Activated naive CD4-positive, alpha-beta T cell treated with anti-CD3 and anti-CD28 coated beads for 36 hours (primary cell): ENCODE measurements at regions of chr14 and their contacts with region 1.

Region 1: GRCh38 chr14:54347997-54348611 is 48.7 kb upstream of the CDKN3 start:
- DNase-seq: no peak
- H3K4me3 Mint-ChIP-seq: no peak overlapping the region
- H3K27ac Mint-ChIP-seq: no peak overlapping the region
- H3K4me1 Mint-ChIP-seq: peaks cover 2% of the 10 kb centered on the region
- H3K27me3 Mint-ChIP-seq: peaks cover 18% of the 10 kb centered on the region

Region 2: GRCh38 chr14:53412803-53413675 is 935.1 kb before region 1 on chr14:
- CTCF ChIA-PET with region 1: no interaction called
- intact Hi-C with region 1: loop called (anchors 1 kb)
- DNase-seq: peak; percentile 6
- H3K4me3 Mint-ChIP-seq: no peak overlapping the region
- H3K27ac Mint-ChIP-seq: no peak overlapping the region
- H3K4me1 Mint-ChIP-seq: no peaks in the 10 kb centered on the region
- H3K27me3 Mint-ChIP-seq: no peaks in the 10 kb centered on the region

Region 3: GRCh38 chr14:53539489-53540126 is 808.5 kb before region 1 on chr14:
- CTCF ChIA-PET with region 1: interaction called, 8 read pairs
- intact Hi-C with region 1: loop called (anchors 1 kb)
- DNase-seq: peak; percentile 75
- H3K4me3 Mint-ChIP-seq: no peak overlapping the region
- H3K27ac Mint-ChIP-seq: no peak overlapping the region
- H3K4me1 Mint-ChIP-seq: no peaks in the 10 kb centered on the region
- H3K27me3 Mint-ChIP-seq: peaks cover 3% of the 10 kb centered on the region

Region 4: DNA sequence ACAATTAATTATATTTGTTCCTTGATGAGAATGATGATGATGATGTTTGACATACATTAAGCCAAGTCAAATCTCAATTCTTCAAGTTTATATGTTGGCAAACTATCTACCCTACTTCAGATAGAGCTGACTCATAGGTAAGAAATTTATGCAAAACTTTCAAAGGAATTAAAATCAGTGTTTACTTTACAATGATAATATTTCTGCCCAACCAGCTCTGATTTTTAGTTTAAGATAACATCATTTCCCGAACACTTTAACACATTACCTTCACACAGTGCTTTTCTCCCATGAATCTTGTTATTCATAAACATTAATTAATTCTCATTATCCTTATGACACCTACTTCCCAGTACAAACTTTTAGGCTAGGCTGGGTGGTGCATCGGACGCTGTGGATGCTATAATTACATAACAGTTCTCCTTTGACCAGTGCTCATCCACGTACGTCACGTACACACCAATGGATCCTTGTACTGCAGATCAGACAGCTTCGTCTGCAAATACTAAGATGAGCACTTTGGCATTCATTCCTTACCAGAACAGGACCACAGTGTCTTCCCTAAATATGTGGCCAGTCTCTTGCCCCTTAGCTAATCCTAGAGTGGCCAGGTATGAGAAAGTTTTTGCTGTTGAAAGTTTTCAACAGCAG is 409.8 kb before region 1 on chr14:
- CTCF ChIA-PET with region 1: no interaction called
- intact Hi-C with region 1: no loop called
- DNase-seq: no peak
- H3K4me3 Mint-ChIP-seq: no peak overlapping the region
- H3K27ac Mint-ChIP-seq: no peak overlapping the region
- H3K4me1 Mint-ChIP-seq: no peaks in the 10 kb centered on the region
- H3K27me3 Mint-ChIP-seq: peaks cover 8% of the 10 kb centered on the region

Region 5: DNA sequence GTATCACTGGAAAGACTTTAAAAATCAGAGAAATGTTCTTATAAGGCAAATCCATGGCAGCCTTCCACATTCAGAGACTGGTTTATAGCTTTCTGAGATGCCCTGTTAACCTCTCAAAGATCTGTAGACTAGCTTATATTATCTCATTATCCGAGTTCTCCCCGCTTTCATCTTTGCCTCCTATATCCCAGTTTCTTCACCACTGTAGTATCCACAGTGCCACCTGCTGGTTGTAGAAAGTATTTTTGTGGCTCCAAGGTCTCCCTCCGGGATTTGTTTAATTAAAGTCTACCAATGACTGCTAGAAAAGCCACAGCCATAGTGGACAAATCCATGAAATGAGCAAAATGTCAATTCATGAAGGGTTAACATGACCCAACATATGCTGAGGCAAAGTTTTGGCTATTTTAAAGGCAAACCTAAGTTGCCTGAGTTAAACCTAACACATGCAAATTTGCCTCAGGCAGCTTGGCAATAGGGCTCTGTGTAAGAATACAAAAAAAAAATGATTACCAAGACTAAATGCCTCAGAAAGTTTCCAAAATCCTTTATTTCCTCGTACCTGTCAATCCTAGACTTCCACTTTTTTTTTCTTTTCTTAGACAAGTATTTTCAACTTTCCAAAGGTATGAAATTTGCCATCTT is 172.7 kb before region 1 on chr14:
- CTCF ChIA-PET with region 1: interaction called, 9 read pairs
- intact Hi-C with region 1: loop called (anchors 1 kb)
- DNase-seq: peak; percentile 73
- H3K4me3 Mint-ChIP-seq: no peak overlapping the region
- H3K27ac Mint-ChIP-seq: no peak overlapping the region
- H3K4me1 Mint-ChIP-seq: peaks cover 4% of the 10 kb centered on the region
- H3K27me3 Mint-ChIP-seq: peaks cover 28% of the 10 kb centered on the region

Region 6: GRCh38 chr14:54329082-54329695 is 18.9 kb before region 1 on chr14:
- CTCF ChIA-PET with region 1: interaction called, 10 read pairs
- intact Hi-C with region 1: no loop called
- DNase-seq: peak; percentile 40
- H3K4me3 Mint-ChIP-seq: no peak overlapping the region
- H3K27ac Mint-ChIP-seq: no peak overlapping the region
- H3K4me1 Mint-ChIP-seq: no peaks in the 10 kb centered on the region
- H3K27me3 Mint-ChIP-seq: peaks cover 9% of the 10 kb centered on the region